GM12878 (cell line): ENCODE measurements at regions of chr4 and their contacts with region 1.

Region 1: GRCh38 chr4:38856524-38857337 is at the start of gene TLR6:
- DNase-seq: peak; percentile 91
- ATAC-seq: peak; percentile 59
- H3K4me3 ChIP-seq: peak within 1 kb of the TSS; percentile 75
- H3K27ac ChIP-seq: peak within 1 kb of the TSS; percentile 96
- H3K4me1 ChIP-seq: peaks cover 14% of the 10 kb centered on the region
- H3K27me3 ChIP-seq: no peaks in the 10 kb centered on the region
- CTCF ChIP-seq: peak; percentile 62 to 79 (median 77)
- EP300 ChIP-seq: peak in 1 of 2 experiments; percentile 51; a peak in 1 of 4 replicates
- POLR2A ChIP-seq: no peak
- RAD21 ChIP-seq: peak; percentile 88
- polyA plus RNA-seq, gene TLR6: 1.1 to 1.5 TPM

Region 2: GRCh38 chr4:38179690-38180377 is 676.9 kb before region 1 on chr4:
- CTCF ChIA-PET with region 1: interaction called, 8 read pairs
- POLR2A ChIA-PET with region 1: no interaction called
- RAD21 ChIA-PET with region 1: interaction called, 8 read pairs
- SMC1A ChIA-PET with region 1: interaction called, 18 read pairs
- in situ Hi-C with region 1: loop called (anchors 10 kb)
- intact Hi-C with region 1: no loop called
- DNase-seq: peak; percentile 56
- ATAC-seq: peak; percentile 85
- H3K4me3 ChIP-seq: no peak overlapping the region
- H3K27ac ChIP-seq: no peak overlapping the region
- H3K4me1 ChIP-seq: peaks cover 39% of the 10 kb centered on the region
- H3K27me3 ChIP-seq: no peaks in the 10 kb centered on the region
- CTCF ChIP-seq: peak; percentile 76 to 94 (median 88)
- EP300 ChIP-seq: no peak
- POLR2A ChIP-seq: no peak
- RAD21 ChIP-seq: peak; percentile 98

Region 3: DNA sequence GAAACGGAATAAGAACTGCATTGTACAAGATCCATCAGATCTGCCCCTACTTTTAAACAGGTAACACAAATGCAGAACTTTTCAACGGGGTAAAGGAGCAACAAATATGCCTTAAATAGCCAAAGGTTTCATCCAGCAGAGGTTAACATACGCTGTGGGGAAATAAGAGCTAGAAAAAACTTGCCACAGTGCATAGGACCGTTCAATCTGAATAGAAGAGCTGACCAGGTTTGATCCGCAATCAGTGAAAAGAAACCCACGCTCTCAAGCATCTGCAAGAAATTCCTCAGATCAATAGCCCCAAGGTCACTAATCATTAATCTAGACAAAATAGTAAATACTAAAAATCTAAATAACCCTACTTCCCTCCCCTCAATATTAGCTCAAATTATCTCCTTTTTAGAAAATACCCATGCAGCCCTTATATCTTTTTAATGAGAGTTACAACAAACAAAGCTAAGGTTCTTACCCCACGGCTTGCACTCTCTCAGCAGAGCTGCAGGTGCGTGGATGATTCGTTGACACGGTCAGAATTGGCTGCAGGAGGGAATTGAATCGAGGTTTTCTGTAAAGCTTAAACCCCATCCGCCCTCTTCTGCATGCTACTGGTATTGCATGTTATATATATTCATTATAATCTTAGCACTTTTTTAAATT is 74.2 kb before region 1 on chr4 and contains the start of gene TLR10:
- CTCF ChIA-PET with region 1: interaction called, 90 read pairs
- POLR2A ChIA-PET with region 1: interaction called, 20 read pairs
- RAD21 ChIA-PET with region 1: interaction called, 80 read pairs
- SMC1A ChIA-PET with region 1: interaction called, 81 read pairs
- in situ Hi-C with region 1: no loop called
- intact Hi-C with region 1: loop called (anchors 1 kb)
- DNase-seq: peak; percentile 82
- ATAC-seq: peak; percentile 74
- H3K4me3 ChIP-seq: peak within 1 kb of the TSS; percentile 81
- H3K27ac ChIP-seq: peak within 1 kb of the TSS; percentile 96
- H3K4me1 ChIP-seq: peaks cover 22% of the 10 kb centered on the region
- H3K27me3 ChIP-seq: no peaks in the 10 kb centered on the region
- CTCF ChIP-seq: peak; percentile 60 to 68 (median 63)
- EP300 ChIP-seq: no peak
- POLR2A ChIP-seq: peak; percentile 72
- RAD21 ChIP-seq: peak; percentile 83
- polyA plus RNA-seq, gene TLR10: 31.5 to 41.8 TPM

Region 4: DNA sequence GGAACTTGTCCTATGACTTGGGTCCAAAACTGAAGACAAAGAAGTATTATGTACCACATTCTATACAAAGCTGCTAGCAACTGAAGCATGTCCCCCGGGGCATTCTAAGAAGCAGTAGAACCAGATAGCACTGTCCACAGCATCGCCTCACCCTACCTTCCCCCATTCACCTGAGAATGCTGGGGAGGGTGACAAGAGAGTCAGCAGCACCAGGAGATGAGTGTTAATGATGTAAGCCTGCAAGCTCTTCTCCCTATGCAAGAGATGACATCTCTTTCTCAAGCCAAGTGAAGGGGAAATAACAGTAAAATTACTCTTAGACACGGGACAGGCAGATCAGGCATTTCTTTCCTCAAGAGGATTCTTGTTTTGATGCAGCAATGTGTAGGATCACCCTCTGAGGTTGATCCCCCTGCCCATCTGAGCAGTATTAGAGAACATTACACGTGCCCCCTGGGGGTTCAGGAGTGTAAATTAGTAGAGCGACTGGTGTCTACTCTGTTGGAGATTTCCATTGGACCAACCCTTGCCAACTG is 38.2 kb before region 1 on chr4:
- CTCF ChIA-PET with region 1: interaction called, 23 read pairs
- POLR2A ChIA-PET with region 1: interaction called, 16 read pairs
- RAD21 ChIA-PET with region 1: interaction called, 39 read pairs
- SMC1A ChIA-PET with region 1: interaction called, 88 read pairs
- in situ Hi-C with region 1: no loop called
- intact Hi-C with region 1: loop called (anchors 1 kb)
- DNase-seq: peak; percentile 81
- ATAC-seq: peak; percentile 76
- H3K4me3 ChIP-seq: no peak overlapping the region
- H3K27ac ChIP-seq: peak overlapping the region; percentile 96
- H3K4me1 ChIP-seq: peaks cover 40% of the 10 kb centered on the region
- H3K27me3 ChIP-seq: no peaks in the 10 kb centered on the region
- CTCF ChIP-seq: no peak
- EP300 ChIP-seq: peak; percentile 94 to 96; a peak in 3 of 4 replicates
- POLR2A ChIP-seq: no peak; the same call in 1 of the 2 replicates
- RAD21 ChIP-seq: no peak

Region 5: DNA sequence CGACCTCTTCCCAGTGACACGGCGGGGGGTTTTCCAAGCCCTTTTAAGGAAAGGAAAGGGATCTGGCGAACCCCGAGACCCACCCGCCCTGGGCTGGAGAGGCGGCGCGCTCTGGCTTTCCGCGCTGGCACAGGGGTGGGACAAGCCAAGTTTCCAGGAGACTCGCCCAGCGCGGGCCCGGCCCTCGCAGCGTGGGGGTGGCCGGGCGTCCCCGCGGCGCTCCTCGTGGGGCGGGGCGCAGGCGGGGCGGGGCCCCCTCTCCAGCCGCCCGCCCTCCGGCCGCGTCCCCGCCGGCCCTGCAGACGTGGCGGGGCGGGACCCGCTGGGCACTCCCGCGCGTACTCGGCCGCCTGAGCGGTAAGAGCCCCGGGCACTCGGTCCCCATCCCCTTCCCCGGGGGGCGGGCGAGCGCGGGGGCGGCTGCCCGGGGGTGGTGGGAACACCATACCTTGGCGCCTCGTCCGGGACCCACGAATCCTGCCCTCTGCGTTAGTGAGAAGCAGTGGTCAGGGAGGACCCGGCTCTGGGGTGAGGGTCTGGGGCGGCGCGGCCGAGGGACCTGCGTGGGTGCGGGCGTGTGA is 10.8 kb after region 1 on chr4 and contains the start of gene FAM114A1:
- CTCF ChIA-PET with region 1: interaction called, 31 read pairs
- POLR2A ChIA-PET with region 1: interaction called, 4 read pairs
- RAD21 ChIA-PET with region 1: interaction called, 7 read pairs
- SMC1A ChIA-PET with region 1: interaction called, 7 read pairs
- in situ Hi-C with region 1: no loop called
- intact Hi-C with region 1: no loop called
- DNase-seq: no peak
- ATAC-seq: peak; percentile 99
- H3K4me3 ChIP-seq: peak within 1 kb of the TSS; percentile 82
- H3K27ac ChIP-seq: no peak within 1 kb of the TSS; the same call in 1 of the 2 replicates
- H3K4me1 ChIP-seq: peaks cover 7% of the 10 kb centered on the region
- H3K27me3 ChIP-seq: no peaks in the 10 kb centered on the region
- CTCF ChIP-seq: no peak
- EP300 ChIP-seq: no peak
- POLR2A ChIP-seq: peak; percentile 80
- RAD21 ChIP-seq: no peak
- polyA plus RNA-seq, gene FAM114A1: 1.3 to 1.9 TPM

Region 6: GRCh38 chr4:38894340-38894982 is 37.7 kb after region 1 on chr4:
- CTCF ChIA-PET with region 1: interaction called, 100 read pairs
- POLR2A ChIA-PET with region 1: interaction called, 5 read pairs
- RAD21 ChIA-PET with region 1: interaction called, 14 read pairs
- SMC1A ChIA-PET with region 1: interaction called, 38 read pairs
- in situ Hi-C with region 1: no loop called
- intact Hi-C with region 1: loop called (anchors 2 kb)
- DNase-seq: no peak
- ATAC-seq: peak; percentile 42
- H3K4me3 ChIP-seq: no peak overlapping the region
- H3K27ac ChIP-seq: no peak overlapping the region
- H3K4me1 ChIP-seq: no peaks in the 10 kb centered on the region
- H3K27me3 ChIP-seq: no peaks in the 10 kb centered on the region
- CTCF ChIP-seq: peak in 2 of 3 experiments; percentile 4 to 27; a peak in 2 of 6 replicates
- EP300 ChIP-seq: no peak
- POLR2A ChIP-seq: no peak
- RAD21 ChIP-seq: no peak